Mucosa of descending colon (tissue), 3 donors: ENCODE measurements at regions of chr4 and their contacts with region 1.

Region 1: DNA sequence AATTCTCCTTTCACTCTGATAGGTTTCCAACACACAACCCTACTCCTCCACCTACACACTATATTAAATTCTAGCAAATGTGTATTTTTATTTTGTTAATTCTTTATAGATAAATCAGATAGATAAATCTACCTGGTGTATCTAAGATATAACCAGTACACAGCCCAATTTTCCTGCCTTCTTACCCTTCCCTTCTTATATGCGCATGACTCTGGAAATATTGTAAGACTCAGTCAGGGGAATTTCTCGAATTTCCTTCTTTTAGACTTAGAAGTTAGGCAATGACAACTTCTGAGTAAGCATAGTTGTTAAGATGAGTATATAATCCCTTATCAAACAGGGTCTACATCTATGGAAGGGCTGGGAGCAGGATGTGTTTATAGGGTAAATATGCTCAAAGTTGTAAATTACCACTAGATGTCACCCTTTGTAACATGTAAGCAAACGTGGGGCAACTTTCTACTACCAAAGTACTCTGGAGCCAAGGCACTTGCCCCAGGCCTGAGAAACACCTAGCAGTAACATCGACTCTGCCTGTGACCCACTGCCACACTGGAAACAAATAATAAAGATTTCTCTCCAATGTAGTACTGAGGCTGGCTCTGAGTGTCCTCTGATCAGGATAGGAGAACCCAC is 444.7 kb downstream of the IQCM start:
- DNase-seq: peak in 2 of 3 donors; percentile 18 to 19
- ATAC-seq: peak; percentile 90
- H3K4me3 ChIP-seq: no peak overlapping the region
- H3K4me1 ChIP-seq: no peaks in the 10 kb centered on the region
- CTCF ChIP-seq: no peak

Region 2: GRCh38 chr4:148800943-148801342 is 570.0 kb before region 1 on chr4:
- intact Hi-C with region 1: no loop called
- DNase-seq: no peak
- ATAC-seq: no peak
- H3K4me3 ChIP-seq: no peak overlapping the region
- H3K4me1 ChIP-seq: no peaks in the 10 kb centered on the region
- CTCF ChIP-seq: no peak

Region 3: DNA sequence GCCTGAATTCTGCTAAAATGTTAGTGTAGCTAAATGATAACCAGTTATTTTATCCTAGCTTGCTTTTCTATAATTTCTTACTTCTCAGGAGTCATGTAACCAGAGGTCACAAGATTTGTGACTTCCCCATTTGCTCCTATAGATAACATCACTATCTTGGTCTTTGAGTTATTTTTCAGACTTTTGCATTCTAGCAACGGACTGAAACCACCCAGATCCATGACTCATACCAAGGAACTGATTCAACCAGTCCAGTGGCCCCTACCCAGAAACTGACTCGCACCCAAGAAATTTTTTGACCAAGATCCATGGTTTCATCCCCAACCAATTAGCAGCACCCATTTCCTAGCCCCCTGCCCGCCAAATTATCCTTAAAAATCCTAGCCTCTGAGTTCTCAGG is 394.7 kb after region 1 on chr4:
- intact Hi-C with region 1: no loop called
- DNase-seq: no peak
- ATAC-seq: no peak
- H3K4me3 ChIP-seq: no peak overlapping the region
- H3K4me1 ChIP-seq: no peaks in the 10 kb centered on the region
- CTCF ChIP-seq: no peak

Region 4: GRCh38 chr4:149897783-149898182 is 526.9 kb after region 1 on chr4:
- intact Hi-C with region 1: loop called in 1 of 2 experiments (anchors 5 kb)
- DNase-seq: no peak
- ATAC-seq: peak; percentile 44
- H3K4me3 ChIP-seq: no peak overlapping the region
- H3K4me1 ChIP-seq: peaks cover 4% of the 10 kb centered on the region
- CTCF ChIP-seq: no peak